ENCODE measurements at regions of chr9 and their contacts with region 1.

Region 1: DNA sequence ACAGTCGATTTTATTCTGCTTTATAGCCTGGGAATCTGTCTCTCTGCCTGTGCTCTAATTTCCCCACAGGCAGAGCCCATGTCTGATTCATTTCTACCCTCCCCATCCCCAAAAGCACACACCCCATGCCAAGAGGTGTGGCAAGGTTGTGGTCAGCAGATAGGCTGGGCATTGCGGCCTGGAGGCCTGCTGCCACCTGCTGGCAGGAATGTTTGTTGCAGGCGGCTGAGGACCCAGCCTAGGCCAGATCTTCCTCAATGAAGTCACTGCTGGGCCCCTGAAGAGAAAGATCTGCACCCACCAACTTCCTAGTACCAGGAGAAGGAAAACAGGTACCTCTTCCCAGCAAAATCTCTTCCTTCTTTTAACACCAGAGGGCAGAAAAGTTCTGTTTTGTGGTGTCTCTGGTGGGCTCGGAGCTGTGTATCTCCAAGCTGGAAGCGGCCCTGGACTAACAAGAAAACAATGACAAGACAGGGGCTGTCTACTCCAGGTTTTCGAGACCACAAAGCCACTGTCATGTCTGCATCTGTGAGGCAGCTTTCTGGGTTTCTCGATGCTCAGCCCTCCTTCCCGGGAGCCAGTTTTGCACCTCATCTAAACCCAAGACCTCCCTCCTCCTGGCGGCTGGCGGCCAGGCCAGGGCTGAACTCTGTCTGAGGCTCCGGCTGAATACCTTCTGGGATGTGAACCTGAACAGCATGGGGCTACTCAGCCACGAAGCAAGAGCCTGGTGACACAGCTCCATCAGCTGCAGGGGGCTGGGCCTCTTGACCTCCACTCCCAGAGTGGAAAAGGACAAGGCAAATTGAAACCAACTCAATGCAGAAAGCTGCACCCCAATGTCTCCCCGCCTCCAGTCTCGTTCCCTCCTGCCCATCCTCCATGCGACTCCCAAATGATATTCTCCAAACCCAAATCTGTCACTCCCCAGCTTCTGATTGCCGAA is 4.9 kb downstream of the ANKS6 start:
- DNase-seq: peak; percentile 77
- H3K4me3 Mint-ChIP-seq: no peak overlapping the region
- H3K27ac Mint-ChIP-seq: no peak overlapping the region
- H3K4me1 Mint-ChIP-seq: peaks cover 28% of the 10 kb centered on the region
- H3K27me3 Mint-ChIP-seq: no peaks in the 10 kb centered on the region

Region 2: DNA sequence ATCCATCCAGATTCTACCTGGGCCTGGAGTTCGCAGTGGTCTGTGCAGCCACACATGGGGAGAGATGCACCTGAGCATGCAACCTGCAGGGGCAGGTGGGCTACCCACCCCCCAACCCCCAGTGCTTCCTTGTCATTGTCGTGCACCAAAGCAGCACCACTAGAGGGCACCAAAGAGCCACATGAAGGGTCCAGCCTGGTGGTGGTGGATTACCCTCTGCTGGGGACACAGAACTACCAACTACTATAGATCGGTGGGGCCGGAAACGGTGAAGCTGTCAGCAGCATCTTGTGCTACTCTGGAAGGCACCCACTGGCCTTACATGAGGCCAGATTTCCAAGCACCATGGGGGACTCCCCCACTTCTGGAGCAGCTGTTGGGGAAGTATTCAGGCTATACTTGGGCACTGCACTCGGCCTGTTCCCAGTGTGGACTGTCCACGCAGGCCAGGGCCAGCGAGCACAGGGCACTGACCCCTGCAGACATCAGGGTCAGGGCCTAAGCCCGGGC is 475.8 kb before region 1 on chr9:
- CTCF ChIA-PET with region 1: interaction called, 19 read pairs
- POLR2A ChIA-PET with region 1: no interaction called
- intact Hi-C with region 1: loop called (anchors 1 kb)
- DNase-seq: peak; percentile 85
- H3K4me3 Mint-ChIP-seq: no peak overlapping the region
- H3K27ac Mint-ChIP-seq: no peak overlapping the region
- H3K4me1 Mint-ChIP-seq: no peaks in the 10 kb centered on the region
- H3K27me3 Mint-ChIP-seq: no peaks in the 10 kb centered on the region

Region 3: DNA sequence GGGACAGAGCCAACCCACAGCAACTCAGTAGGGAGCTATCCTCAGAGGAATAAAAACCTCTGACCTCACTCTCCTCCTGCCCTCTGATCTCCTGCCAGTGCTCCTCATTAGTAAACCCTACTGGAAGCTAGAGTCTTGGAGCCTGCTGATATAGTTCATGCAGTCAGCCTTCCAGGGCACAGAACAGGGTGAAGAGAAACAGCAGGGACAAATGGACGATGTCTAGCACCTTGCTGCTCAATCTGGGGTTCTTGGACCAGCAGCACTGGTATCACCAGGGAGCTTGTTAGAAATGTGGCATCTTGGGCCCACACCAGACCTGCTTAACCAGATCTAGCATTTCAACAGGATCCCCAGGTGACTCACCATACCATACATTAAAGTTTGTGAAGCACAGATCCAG is 10.5 kb after region 1 on chr9:
- CTCF ChIA-PET with region 1: interaction called, 14 read pairs
- POLR2A ChIA-PET with region 1: interaction called, 3 read pairs
- intact Hi-C with region 1: loop called (anchors 1 kb)
- DNase-seq: no peak
- H3K4me3 Mint-ChIP-seq: no peak overlapping the region
- H3K27ac Mint-ChIP-seq: no peak overlapping the region
- H3K4me1 Mint-ChIP-seq: peaks cover 6% of the 10 kb centered on the region
- H3K27me3 Mint-ChIP-seq: peaks cover 7% of the 10 kb centered on the region

Region 4: GRCh38 chr9:98971168-98971914 is 179.9 kb after region 1 on chr9:
- CTCF ChIA-PET with region 1: no interaction called
- POLR2A ChIA-PET with region 1: no interaction called
- intact Hi-C with region 1: no loop called
- DNase-seq: no peak
- H3K4me3 Mint-ChIP-seq: no peak overlapping the region
- H3K27ac Mint-ChIP-seq: no peak overlapping the region
- H3K4me1 Mint-ChIP-seq: peaks cover 6% of the 10 kb centered on the region
- H3K27me3 Mint-ChIP-seq: peaks cover 8% of the 10 kb centered on the region

Measured in activated CD4-positive, alpha-beta memory T cell treated with anti-CD3 and anti-CD28 coated beads for 36 hours (primary cell).